ENCODE measurements at regions of chr3 and their contacts with region 1.

Region 1: GRCh38 chr3:102536456-102536855 is 101.6 kb downstream of the ZPLD1 start:
- DNase-seq: no peak
- ATAC-seq: no peak
- H3K4me3 Mint-ChIP-seq: no peak overlapping the region
- H3K27ac Mint-ChIP-seq: no peak overlapping the region
- H3K4me1 Mint-ChIP-seq: no peaks in the 10 kb centered on the region
- H3K27me3 Mint-ChIP-seq: peaks cover 6% of the 10 kb centered on the region

Region 2: GRCh38 chr3:101685870-101686412 is 850.5 kb before region 1 on chr3:
- CTCF ChIA-PET with region 1: no interaction called
- POLR2A ChIA-PET with region 1: no interaction called
- intact Hi-C with region 1: loop called in 1 of 2 experiments (anchors 5 kb)
- DNase-seq: no peak
- ATAC-seq: no peak
- H3K4me3 Mint-ChIP-seq: peak overlapping the region; percentile 100
- H3K27ac Mint-ChIP-seq: peak overlapping the region; percentile 99
- H3K4me1 Mint-ChIP-seq: peaks cover 45% of the 10 kb centered on the region
- H3K27me3 Mint-ChIP-seq: no peaks in the 10 kb centered on the region

Region 3: GRCh38 chr3:101695779-101696372 is 840.6 kb before region 1 on chr3:
- CTCF ChIA-PET with region 1: no interaction called
- POLR2A ChIA-PET with region 1: no interaction called
- intact Hi-C with region 1: loop called in 1 of 2 experiments (anchors 5 kb)
- DNase-seq: peak; percentile 48
- ATAC-seq: no peak
- H3K4me3 Mint-ChIP-seq: no peak overlapping the region
- H3K27ac Mint-ChIP-seq: no peak overlapping the region
- H3K4me1 Mint-ChIP-seq: peaks cover 7% of the 10 kb centered on the region
- H3K27me3 Mint-ChIP-seq: no peaks in the 10 kb centered on the region

Region 4: DNA sequence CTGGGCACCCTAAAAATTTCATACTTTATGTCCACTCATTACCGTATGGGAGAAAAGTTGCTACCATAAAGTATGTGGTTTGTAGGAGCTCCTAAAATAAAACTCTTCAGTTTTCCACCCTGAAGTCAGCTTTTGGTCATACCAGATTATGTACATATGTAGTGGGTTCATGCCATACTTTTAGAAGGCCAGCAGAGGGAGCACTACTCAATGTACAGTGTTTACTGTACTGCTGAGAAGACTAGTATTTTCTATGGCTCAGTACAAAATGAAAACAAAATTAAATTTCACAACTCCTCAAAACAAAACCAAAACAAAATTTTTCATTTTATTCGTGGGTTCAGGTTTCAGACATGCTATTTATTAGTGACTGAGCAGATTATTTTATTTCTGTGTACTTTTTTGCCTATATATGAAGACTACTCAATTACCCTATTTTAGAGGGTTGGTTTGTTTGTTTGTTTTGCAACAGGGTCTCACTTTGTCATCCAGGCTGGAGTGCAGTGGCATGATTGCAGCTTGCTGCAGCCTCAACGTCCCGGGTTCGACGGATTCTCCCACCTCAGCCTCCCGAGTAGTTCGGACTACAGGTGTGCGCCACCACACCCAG is 733.2 kb before region 1 on chr3:
- CTCF ChIA-PET with region 1: interaction called, 7 read pairs
- POLR2A ChIA-PET with region 1: no interaction called
- intact Hi-C with region 1: loop called (anchors 1 to 5 kb)
- DNase-seq: peak; percentile 68
- ATAC-seq: peak; percentile 99
- H3K4me3 Mint-ChIP-seq: no peak overlapping the region
- H3K27ac Mint-ChIP-seq: no peak overlapping the region
- H3K4me1 Mint-ChIP-seq: peaks cover 36% of the 10 kb centered on the region
- H3K27me3 Mint-ChIP-seq: no peaks in the 10 kb centered on the region

Region 5: GRCh38 chr3:101809178-101810021 is 727.1 kb before region 1 on chr3:
- CTCF ChIA-PET with region 1: interaction called, 5 read pairs
- POLR2A ChIA-PET with region 1: no interaction called
- intact Hi-C with region 1: loop called (anchors 2 to 5 kb)
- DNase-seq: peak; percentile 45
- ATAC-seq: peak; percentile 53
- H3K4me3 Mint-ChIP-seq: no peak overlapping the region
- H3K27ac Mint-ChIP-seq: peak overlapping the region; percentile 53
- H3K4me1 Mint-ChIP-seq: peaks cover 48% of the 10 kb centered on the region
- H3K27me3 Mint-ChIP-seq: no peaks in the 10 kb centered on the region

Region 6: GRCh38 chr3:102235679-102236078 is 300.8 kb before region 1 on chr3:
- CTCF ChIA-PET with region 1: interaction called, 99 read pairs
- POLR2A ChIA-PET with region 1: no interaction called
- intact Hi-C with region 1: loop called (anchors 1 kb)
- DNase-seq: peak; percentile 76
- ATAC-seq: peak; percentile 42
- H3K4me3 Mint-ChIP-seq: no peak overlapping the region
- H3K27ac Mint-ChIP-seq: no peak overlapping the region
- H3K4me1 Mint-ChIP-seq: peaks cover 3% of the 10 kb centered on the region
- H3K27me3 Mint-ChIP-seq: peaks cover 4% of the 10 kb centered on the region

Measured in activated CD4-positive, alpha-beta T cell treated with anti-CD3 and anti-CD28 coated beads for 36 hours (primary cell).